ENCODE measurements at regions of chr9 and their contacts with region 1.

Region 1: GRCh38 chr9:93003552-93004407 is 54.7 kb upstream of the SUSD3 start:
- DNase-seq: peak; percentile 71
- ATAC-seq: peak; percentile 89
- H3K4me3 Mint-ChIP-seq: no peak overlapping the region
- H3K27ac Mint-ChIP-seq: peak overlapping the region; percentile 74
- H3K4me1 Mint-ChIP-seq: peaks cover 45% of the 10 kb centered on the region
- H3K27me3 Mint-ChIP-seq: no peaks in the 10 kb centered on the region

Region 2: DNA sequence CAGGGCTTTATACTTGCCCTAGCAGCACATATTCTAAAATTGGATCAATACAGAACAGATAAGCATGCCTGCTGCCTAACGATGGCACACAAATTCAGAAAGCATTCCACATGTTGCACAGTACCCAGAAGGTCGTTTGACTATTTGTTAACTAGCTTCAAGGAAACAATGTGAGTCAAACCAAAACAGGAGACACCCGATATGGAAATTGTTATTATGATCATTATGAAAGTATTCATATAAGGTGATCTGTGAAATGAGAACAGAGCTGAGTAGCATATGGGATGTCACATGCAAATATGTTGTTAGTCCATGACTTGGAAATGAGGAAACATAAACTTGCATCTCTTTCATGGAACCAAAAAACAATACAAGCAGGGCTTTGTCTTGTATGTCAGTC is 182.8 kb before region 1 on chr9:
- CTCF ChIA-PET with region 1: no interaction called
- DNase-seq: no peak
- ATAC-seq: peak; percentile 63
- H3K4me3 Mint-ChIP-seq: no peak overlapping the region
- H3K27ac Mint-ChIP-seq: no peak overlapping the region
- H3K4me1 Mint-ChIP-seq: peaks cover 7% of the 10 kb centered on the region
- H3K27me3 Mint-ChIP-seq: peaks cover 34% of the 10 kb centered on the region

Region 3: GRCh38 chr9:92860867-92861266 is 142.9 kb before region 1 on chr9:
- CTCF ChIA-PET with region 1: no interaction called
- DNase-seq: no peak
- ATAC-seq: no peak
- H3K4me3 Mint-ChIP-seq: no peak overlapping the region
- H3K27ac Mint-ChIP-seq: no peak overlapping the region
- H3K4me1 Mint-ChIP-seq: peaks cover 18% of the 10 kb centered on the region
- H3K27me3 Mint-ChIP-seq: no peaks in the 10 kb centered on the region

Region 4: GRCh38 chr9:92973700-92974099 is 30.1 kb before region 1 on chr9:
- CTCF ChIA-PET with region 1: interaction called, 10 read pairs
- DNase-seq: no peak
- ATAC-seq: no peak
- H3K4me3 Mint-ChIP-seq: no peak overlapping the region
- H3K27ac Mint-ChIP-seq: peak overlapping the region; percentile 29
- H3K4me1 Mint-ChIP-seq: peaks cover 73% of the 10 kb centered on the region
- H3K27me3 Mint-ChIP-seq: no peaks in the 10 kb centered on the region

Region 5: DNA sequence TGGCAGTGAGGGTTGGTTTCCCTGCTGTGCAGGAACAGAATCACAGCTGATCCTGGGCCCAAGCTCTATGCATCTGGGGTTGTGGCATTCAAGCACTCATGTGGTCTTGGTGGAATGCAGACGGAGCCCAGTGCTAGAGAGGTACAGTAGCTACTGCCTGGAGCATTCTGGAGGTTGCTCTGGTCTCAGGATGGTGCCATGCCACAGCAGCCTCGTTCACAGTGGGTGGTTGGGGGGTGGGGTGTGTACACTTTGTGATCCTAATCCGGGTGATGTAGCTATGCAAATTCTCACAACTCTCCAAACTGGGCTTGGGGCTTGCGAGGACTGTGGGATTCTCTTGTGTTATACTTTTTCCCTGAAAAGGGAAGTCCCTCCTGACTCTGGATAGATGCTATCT is 11.2 kb before region 1 on chr9:
- CTCF ChIA-PET with region 1: interaction called, 10 read pairs
- DNase-seq: no peak
- ATAC-seq: no peak
- H3K4me3 Mint-ChIP-seq: no peak overlapping the region
- H3K27ac Mint-ChIP-seq: no peak overlapping the region
- H3K4me1 Mint-ChIP-seq: peaks cover 54% of the 10 kb centered on the region
- H3K27me3 Mint-ChIP-seq: no peaks in the 10 kb centered on the region

Region 6: DNA sequence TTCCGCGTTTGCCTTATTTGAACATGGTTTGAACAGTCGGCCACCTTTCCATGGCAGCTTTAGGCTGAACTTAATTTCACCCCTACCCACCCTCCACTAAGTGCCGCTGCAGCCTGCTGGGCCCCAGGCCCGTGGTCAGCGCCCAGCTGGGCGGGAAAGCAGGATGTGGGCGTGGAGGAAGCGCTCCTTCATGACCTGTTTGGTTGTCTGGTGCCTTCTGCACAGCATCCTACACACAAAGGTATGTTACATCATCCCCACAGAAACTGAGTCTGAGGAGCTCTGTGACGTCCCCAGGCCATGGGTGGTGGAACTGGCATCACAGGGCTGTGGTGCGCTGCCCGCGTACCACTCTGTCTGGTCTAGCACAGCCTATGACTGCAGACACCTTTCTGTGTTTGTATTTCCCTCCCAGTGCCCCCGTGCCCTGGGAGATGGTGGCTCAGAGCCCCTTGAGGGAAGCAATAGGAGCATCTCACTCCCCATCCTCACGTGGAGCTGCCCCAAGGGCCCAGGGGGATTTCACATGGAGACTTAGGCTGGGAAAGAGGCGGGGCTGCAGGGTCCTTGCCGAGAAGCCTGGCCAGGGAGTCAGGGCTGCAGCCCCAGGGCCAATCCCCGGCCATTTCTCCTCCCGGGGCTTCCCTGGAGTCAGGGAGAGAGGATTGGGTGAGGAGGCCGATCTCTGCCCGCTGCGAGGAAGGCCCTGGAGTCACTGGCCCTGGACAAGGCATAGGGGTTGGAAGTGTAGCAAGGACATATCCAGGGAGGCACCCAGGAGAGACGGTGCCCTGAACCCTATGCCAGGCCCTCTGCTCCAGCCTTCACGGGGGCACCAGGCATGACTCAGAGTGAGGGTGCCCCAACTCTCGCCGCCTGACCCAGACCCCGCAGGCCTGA is 17.2 kb after region 1 on chr9:
- CTCF ChIA-PET with region 1: interaction called, 21 read pairs
- DNase-seq: peak; percentile 71
- ATAC-seq: peak; percentile 37
- H3K4me3 Mint-ChIP-seq: no peak overlapping the region
- H3K27ac Mint-ChIP-seq: peak overlapping the region; percentile 71
- H3K4me1 Mint-ChIP-seq: peaks cover 37% of the 10 kb centered on the region
- H3K27me3 Mint-ChIP-seq: no peaks in the 10 kb centered on the region

Region 7: GRCh38 chr9:93111371-93112115 is 107.8 kb after region 1 on chr9:
- CTCF ChIA-PET with region 1: interaction called, 29 read pairs
- DNase-seq: no peak
- ATAC-seq: no peak
- H3K4me3 Mint-ChIP-seq: no peak overlapping the region
- H3K27ac Mint-ChIP-seq: no peak overlapping the region
- H3K4me1 Mint-ChIP-seq: peaks cover 30% of the 10 kb centered on the region
- H3K27me3 Mint-ChIP-seq: no peaks in the 10 kb centered on the region